Naive thymus-derived CD4-positive, alpha-beta T cell (primary cell): ENCODE measurements at regions of chr2 and their contacts with region 1.

Region 1: GRCh38 chr2:18560031-18560796 is at the start of gene RDH14:
- DNase-seq: peak; percentile 83 to 93 (median 92)
- ATAC-seq: peak; percentile 94
- H3K4me3 ChIP-seq: peak within 1 kb of the TSS; percentile 71
- H3K4me3 Mint-ChIP-seq: peak within 1 kb of the TSS; percentile 86 to 96 (median 92)
- H3K27ac ChIP-seq: peak within 1 kb of the TSS; percentile 94
- H3K27ac Mint-ChIP-seq: peak within 1 kb of the TSS; percentile 92 to 98 (median 96)
- H3K4me1 ChIP-seq: peaks cover 6 to 16% of the 10 kb centered on the region in 2 donors
- H3K4me1 Mint-ChIP-seq: peaks cover 19 to 66% (median 52%) of the 10 kb centered on the region in 7 donors
- H3K27me3 ChIP-seq: no peaks in the 10 kb centered on the region
- H3K27me3 Mint-ChIP-seq: no peaks in the 10 kb centered on the region
- total RNA-seq, gene RDH14: 9.4 to 20.9 (median 14.9) TPM

Region 2: GRCh38 chr2:18520451-18521425 is 39.5 kb before region 1 on chr2:
- CTCF ChIA-PET with region 1: interaction called, 3 read pairs
- POLR2A ChIA-PET with region 1: interaction called, 5 read pairs
- intact Hi-C with region 1: loop called (anchors 1 kb)
- DNase-seq: peak; percentile 39 to 72 (median 65)
- ATAC-seq: peak; percentile 78
- H3K4me3 ChIP-seq: no peak overlapping the region
- H3K4me3 Mint-ChIP-seq: no peak overlapping the region
- H3K27ac ChIP-seq: no peak overlapping the region
- H3K27ac Mint-ChIP-seq: no peak overlapping the region
- H3K4me1 ChIP-seq: no peaks in the 10 kb centered on the region
- H3K4me1 Mint-ChIP-seq: no peaks in the 10 kb centered on the region
- H3K27me3 ChIP-seq: no peaks in the 10 kb centered on the region
- H3K27me3 Mint-ChIP-seq: peaks cover 9 to 19% (median 17%) of the 10 kb centered on the region in 5 donors

Region 3: DNA sequence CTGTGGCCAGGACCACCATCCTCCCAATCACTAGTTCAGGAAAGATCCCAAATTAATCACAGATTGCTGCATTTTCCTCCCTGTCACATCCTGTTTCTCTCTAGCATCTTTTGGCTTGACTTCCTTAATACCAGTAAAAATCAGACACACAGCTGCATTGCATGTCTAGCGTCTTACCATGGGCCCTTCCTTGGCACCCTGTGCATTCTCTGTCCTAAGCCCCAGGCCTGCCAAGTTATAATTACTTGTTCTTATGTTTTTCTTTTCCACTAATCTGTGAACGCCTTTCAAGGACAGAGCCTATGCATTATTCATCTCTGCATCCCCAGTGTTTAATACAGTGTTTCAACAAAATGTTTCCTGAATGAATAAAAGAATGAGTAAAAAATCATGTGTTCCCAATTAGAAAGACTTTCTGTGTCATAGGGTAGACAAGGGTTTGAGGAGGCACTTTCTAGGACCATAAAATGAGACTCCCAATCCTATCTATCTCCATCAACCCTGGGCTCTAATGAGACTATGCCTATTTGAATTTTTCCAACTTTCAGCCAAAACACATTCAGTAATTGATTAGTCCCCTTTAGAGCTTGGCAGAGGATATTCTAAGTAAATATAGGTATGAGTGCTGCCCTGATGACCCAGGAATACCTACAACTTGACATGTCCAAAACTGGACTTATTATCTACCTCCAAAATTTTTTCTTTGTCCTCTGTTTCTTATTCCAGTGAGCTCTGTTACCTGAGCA is 39.5 kb after region 1 on chr2:
- CTCF ChIA-PET with region 1: no interaction called
- POLR2A ChIA-PET with region 1: no interaction called
- intact Hi-C with region 1: no loop called
- DNase-seq: no peak
- ATAC-seq: no peak
- H3K4me3 ChIP-seq: no peak overlapping the region
- H3K4me3 Mint-ChIP-seq: no peak overlapping the region
- H3K27ac ChIP-seq: no peak overlapping the region
- H3K27ac Mint-ChIP-seq: no peak overlapping the region
- H3K4me1 ChIP-seq: no peaks in the 10 kb centered on the region
- H3K4me1 Mint-ChIP-seq: peaks cover 0 to 2% (median 0%) of the 10 kb centered on the region in 7 donors
- H3K27me3 ChIP-seq: no peaks in the 10 kb centered on the region
- H3K27me3 Mint-ChIP-seq: no peaks in the 10 kb centered on the region

Region 4: GRCh38 chr2:19362755-19363473 is 802.7 kb after region 1 on chr2:
- CTCF ChIA-PET with region 1: no interaction called
- POLR2A ChIA-PET with region 1: no interaction called
- intact Hi-C with region 1: loop called (anchors 5 kb)
- DNase-seq: peak in 3 of 9 donors; percentile 41 to 46 (median 44)
- ATAC-seq: peak; percentile 38
- H3K4me3 ChIP-seq: peak overlapping the region; percentile 79
- H3K4me3 Mint-ChIP-seq: peak overlapping the region; percentile 88 to 99 (median 94)
- H3K27ac ChIP-seq: no peak overlapping the region
- H3K27ac Mint-ChIP-seq: peak overlapping the region in 8 of 9 donors; percentile 40 to 90 (median 80)
- H3K4me1 ChIP-seq: peaks cover 7 to 20% of the 10 kb centered on the region in 2 donors
- H3K4me1 Mint-ChIP-seq: peaks cover 19 to 40% (median 35%) of the 10 kb centered on the region in 7 donors
- H3K27me3 ChIP-seq: peaks cover 19 to 30% of the 10 kb centered on the region in 2 donors
- H3K27me3 Mint-ChIP-seq: peaks cover 39 to 97% (median 43%) of the 10 kb centered on the region in 5 donors

Region 5: GRCh38 chr2:19868705-19869580 is 1308.7 kb after region 1 on chr2:
- CTCF ChIA-PET with region 1: no interaction called
- POLR2A ChIA-PET with region 1: interaction called, 5 read pairs
- intact Hi-C with region 1: loop called (anchors 1 kb)
- DNase-seq: peak; percentile 41 to 79 (median 74)
- ATAC-seq: peak; percentile 91
- H3K4me3 ChIP-seq: peak overlapping the region; percentile 74
- H3K4me3 Mint-ChIP-seq: peak overlapping the region; percentile 94 to 98 (median 97)
- H3K27ac ChIP-seq: peak overlapping the region; percentile 76
- H3K27ac Mint-ChIP-seq: peak overlapping the region; percentile 95 to 98 (median 96)
- H3K4me1 ChIP-seq: peaks cover 12 to 19% of the 10 kb centered on the region in 2 donors
- H3K4me1 Mint-ChIP-seq: peaks cover 25 to 48% (median 34%) of the 10 kb centered on the region in 7 donors
- H3K27me3 ChIP-seq: no peaks in the 10 kb centered on the region
- H3K27me3 Mint-ChIP-seq: peaks cover 0 to 7% (median 0%) of the 10 kb centered on the region in 5 donors

Region 6: DNA sequence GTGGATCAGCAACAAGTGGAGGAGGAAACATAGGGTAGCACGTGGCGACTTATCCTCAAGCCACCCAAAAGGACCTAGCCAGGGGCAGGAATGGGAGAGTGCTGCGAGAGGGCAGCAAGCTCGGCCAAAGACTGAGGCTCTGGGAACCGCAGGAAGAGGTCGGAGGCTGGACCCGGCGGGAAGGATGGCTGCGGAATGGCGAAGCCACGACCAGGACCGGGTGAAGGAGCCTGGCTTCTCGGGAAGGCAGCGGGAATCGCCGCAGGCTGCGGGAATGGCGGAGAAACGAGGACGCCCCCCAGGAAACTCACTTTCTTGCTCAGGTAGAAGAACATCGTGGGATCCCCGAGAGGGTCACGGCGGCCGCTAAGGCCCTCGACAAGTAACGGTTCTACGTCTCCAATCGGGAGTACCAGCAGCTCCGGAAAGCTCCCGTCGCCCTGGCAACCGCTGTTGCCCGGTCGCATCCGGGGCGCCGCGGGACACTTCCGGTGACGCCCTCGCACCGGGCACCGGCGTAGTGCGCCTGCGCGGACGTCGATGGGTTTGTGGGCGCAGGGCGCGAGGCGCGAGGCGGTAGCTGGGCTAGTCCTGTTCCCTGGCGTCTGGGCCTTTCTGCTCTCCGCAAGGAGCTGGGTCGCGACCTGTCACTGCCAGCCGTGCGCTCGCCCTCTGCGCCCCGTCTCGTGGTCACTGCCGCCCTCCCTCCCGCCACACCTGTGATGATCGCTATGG is 1429.6 kb after region 1 on chr2 and contains the start of gene WDR35:
- CTCF ChIA-PET with region 1: no interaction called
- POLR2A ChIA-PET with region 1: no interaction called
- intact Hi-C with region 1: loop called (anchors 1 kb)
- DNase-seq: peak; percentile 78 to 99 (median 86)
- ATAC-seq: peak; percentile 95
- H3K4me3 ChIP-seq: peak within 1 kb of the TSS; percentile 91
- H3K4me3 Mint-ChIP-seq: peak within 1 kb of the TSS; percentile 88 to 94 (median 89)
- H3K27ac ChIP-seq: peak within 1 kb of the TSS; percentile 68
- H3K27ac Mint-ChIP-seq: peak within 1 kb of the TSS; percentile 86 to 94 (median 89)
- H3K4me1 ChIP-seq: peaks cover 0 to 14% of the 10 kb centered on the region in 2 donors
- H3K4me1 Mint-ChIP-seq: peaks cover 11 to 33% (median 23%) of the 10 kb centered on the region in 7 donors
- H3K27me3 ChIP-seq: peaks cover 0 to 4% of the 10 kb centered on the region in 2 donors
- H3K27me3 Mint-ChIP-seq: peaks cover 7 to 30% (median 12%) of the 10 kb centered on the region in 5 donors
- total RNA-seq, gene WDR35: 3.2 to 6.0 (median 3.7) TPM